ENCODE measurements at regions of chr3 and their contacts with region 1.

Region 1: DNA sequence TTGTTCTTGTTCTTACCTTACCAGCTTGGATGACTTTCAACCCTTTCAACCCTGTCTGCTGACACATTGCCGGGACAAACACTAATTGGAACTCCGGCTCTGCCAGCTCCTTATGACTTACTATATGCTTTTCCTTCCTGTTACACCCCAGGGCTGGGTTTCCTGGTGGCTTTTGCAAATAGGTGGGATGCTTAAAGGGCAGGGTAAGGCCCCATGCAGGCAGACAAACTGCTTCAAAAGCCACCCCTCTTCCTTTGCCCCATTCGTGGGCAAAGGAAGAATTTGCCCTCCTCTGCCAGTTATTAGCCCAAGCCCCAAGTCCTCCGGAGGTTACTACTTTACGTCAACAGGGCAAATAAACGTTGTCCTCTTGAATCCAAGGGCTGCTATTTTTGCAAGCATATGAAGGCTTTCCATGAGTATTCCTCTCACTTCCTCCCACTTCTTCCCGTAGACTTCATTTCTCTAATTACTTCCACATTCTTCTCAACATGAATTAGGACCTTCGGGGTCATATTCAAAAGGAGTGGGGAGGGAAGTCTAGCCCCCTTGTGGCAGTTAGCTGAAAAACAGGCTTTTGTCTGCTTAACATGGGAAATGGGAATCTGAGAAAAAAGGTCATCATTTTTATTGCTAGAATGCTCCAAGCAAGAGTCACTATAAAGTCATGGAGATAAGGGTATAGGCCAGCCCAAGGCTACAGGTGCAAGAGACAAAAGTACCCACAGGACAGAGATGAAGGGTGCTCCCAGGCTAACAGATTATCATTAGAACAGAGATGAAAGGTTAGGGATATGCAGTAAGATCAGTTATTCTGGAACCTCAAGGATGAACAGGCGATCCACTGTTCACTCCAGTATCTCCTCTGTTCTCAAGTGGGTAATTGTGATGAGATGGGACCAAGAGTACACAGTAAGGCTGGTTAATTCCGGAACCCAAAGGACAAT is 56.3 kb upstream of the FSTL1 start:
- DNase-seq: peak in 2 of 5 donors; percentile 17 to 40
- ATAC-seq: peak in 3 of 4 donors; percentile 38 to 77 (median 67)
- H3K4me3 ChIP-seq: peak overlapping the region in 2 of 12 donors; percentile 1 to 28
- H3K27ac ChIP-seq: peak overlapping the region in 8 of 12 donors; percentile 4 to 36 (median 27)
- H3K4me1 ChIP-seq: peaks cover 0 to 25% (median 14%) of the 10 kb centered on the region in 12 donors
- H3K27me3 ChIP-seq: no peaks in the 10 kb centered on the region
- CTCF ChIP-seq: peak; percentile 55 to 76 (median 68)
- POLR2A ChIP-seq: no peak

Region 2: GRCh38 chr3:120239644-120240043 is 267.5 kb before region 1 on chr3:
- intact Hi-C with region 1: loop called in 2 of 10 experiments (anchors 5 kb)
- DNase-seq: no peak
- ATAC-seq: no peak
- H3K4me3 ChIP-seq: no peak overlapping the region
- H3K27ac ChIP-seq: no peak overlapping the region
- H3K4me1 ChIP-seq: no peaks in the 10 kb centered on the region
- H3K27me3 ChIP-seq: peaks cover 0 to 8% (median 0%) of the 10 kb centered on the region in 9 donors
- CTCF ChIP-seq: no peak
- POLR2A ChIP-seq: no peak

Region 3: GRCh38 chr3:120348981-120349818 is 157.9 kb before region 1 on chr3 and contains the start of gene LRRC58:
- intact Hi-C with region 1: loop called in 1 of 10 experiments (anchors 5 kb)
- DNase-seq: peak; percentile 88 to 96 (median 92)
- ATAC-seq: peak; percentile 97 to 98 (median 97)
- H3K4me3 ChIP-seq: peak within 1 kb of the TSS; percentile 69 to 97 (median 84)
- H3K27ac ChIP-seq: peak within 1 kb of the TSS; percentile 80 to 94 (median 88)
- H3K4me1 ChIP-seq: peaks cover 0 to 41% (median 16%) of the 10 kb centered on the region in 12 donors
- H3K27me3 ChIP-seq: no peaks in the 10 kb centered on the region
- CTCF ChIP-seq: peak in 8 of 12 donors; percentile 10 to 54 (median 31)
- POLR2A ChIP-seq: peak; percentile 9 to 83
- total RNA-seq, gene LRRC58: 7.1 to 17.9 (median 10.5) TPM

Region 4: GRCh38 chr3:120425572-120426250 is 81.4 kb before region 1 on chr3:
- intact Hi-C with region 1: loop called in 6 of 10 experiments (anchors 2 to 10 kb)
- DNase-seq: peak in 3 of 5 donors; percentile 40 to 61 (median 42)
- ATAC-seq: peak in 2 of 4 donors; percentile 27 to 40
- H3K4me3 ChIP-seq: no peak overlapping the region
- H3K27ac ChIP-seq: peak overlapping the region; percentile 17 to 92 (median 80)
- H3K4me1 ChIP-seq: peaks cover 3 to 100% (median 79%) of the 10 kb centered on the region in 12 donors
- H3K27me3 ChIP-seq: no peaks in the 10 kb centered on the region
- CTCF ChIP-seq: no peak
- POLR2A ChIP-seq: no peak

Region 5: DNA sequence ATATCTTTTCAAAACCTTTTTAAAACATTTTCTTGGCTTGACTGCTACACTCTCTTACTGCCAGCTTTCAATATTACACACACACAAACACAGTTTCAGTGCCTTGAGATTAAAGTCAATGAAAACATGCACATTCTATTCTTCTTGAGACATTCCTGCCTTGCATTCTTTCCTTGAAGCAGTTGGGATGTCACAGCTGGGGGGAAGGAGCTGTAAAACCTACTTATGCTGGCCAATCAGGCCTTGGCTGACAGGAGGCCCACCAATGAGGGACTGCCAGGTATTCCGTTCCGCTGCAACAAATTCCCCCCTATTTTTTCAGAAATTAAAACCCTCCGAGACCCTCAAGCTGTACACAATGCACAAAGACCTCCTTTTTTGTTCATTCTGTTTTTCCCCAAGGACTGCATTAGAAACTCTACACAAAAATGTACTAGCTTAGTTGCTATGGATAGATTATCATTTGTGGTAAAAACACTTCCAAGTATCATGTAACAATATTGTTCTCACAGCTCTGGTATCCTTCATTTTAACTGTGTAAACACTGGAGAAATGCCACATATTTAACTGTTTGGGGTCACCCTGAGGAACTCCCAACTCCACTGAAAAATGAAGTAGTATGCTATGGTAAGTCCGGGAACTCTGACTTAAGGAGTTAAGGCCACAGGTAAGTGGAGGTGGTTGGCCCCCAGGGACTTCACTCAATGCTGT is 74.8 kb before region 1 on chr3:
- intact Hi-C with region 1: loop called in 4 of 10 experiments (anchors 5 to 10 kb)
- DNase-seq: no peak
- ATAC-seq: no peak
- H3K4me3 ChIP-seq: no peak overlapping the region
- H3K27ac ChIP-seq: peak overlapping the region in 8 of 12 donors; percentile 26 to 88 (median 60)
- H3K4me1 ChIP-seq: peaks cover 4 to 100% (median 80%) of the 10 kb centered on the region in 12 donors
- H3K27me3 ChIP-seq: no peaks in the 10 kb centered on the region
- CTCF ChIP-seq: no peak
- POLR2A ChIP-seq: no peak

Region 6: DNA sequence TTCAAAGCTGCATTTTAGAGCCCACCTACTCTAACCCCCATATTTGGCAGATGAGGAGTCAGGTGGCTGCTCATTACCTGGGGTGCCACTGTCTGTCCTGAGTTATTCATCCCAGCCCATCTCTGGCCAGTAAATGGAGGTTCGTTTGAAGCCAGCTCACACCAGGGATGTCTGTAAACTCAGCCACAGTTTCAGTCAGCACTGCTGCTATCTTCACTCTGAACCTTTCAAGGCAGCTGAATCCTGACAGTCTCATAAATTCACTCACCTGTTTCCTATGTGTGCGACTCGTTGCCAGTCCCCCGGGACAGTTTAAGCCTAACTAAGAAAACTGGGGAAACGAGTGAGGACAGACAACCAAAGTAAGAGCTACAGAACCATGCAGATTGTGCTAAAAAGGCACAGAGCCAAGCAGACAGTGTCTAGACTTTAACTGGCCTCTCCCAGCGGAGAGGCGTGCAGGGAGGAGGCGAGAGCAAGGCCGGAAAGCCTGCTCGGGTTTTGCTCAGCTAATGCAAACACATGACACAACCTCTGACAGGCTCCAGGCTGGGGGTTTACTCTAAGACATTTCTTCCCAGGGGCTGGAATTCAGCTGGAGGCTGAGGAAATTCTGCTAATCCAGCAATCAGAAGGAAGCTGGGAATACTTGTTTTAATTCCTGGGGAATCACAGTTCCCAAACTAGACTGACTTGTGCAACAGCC is 68.3 kb before region 1 on chr3:
- intact Hi-C with region 1: loop called in 2 of 10 experiments (anchors 5 kb)
- DNase-seq: peak; percentile 75 to 83 (median 82)
- ATAC-seq: peak; percentile 53 to 82 (median 80)
- H3K4me3 ChIP-seq: no peak overlapping the region
- H3K27ac ChIP-seq: peak overlapping the region in 11 of 12 donors; percentile 30 to 87 (median 70)
- H3K4me1 ChIP-seq: peaks cover 14 to 99% (median 84%) of the 10 kb centered on the region in 12 donors
- H3K27me3 ChIP-seq: no peaks in the 10 kb centered on the region
- CTCF ChIP-seq: no peak
- POLR2A ChIP-seq: no peak

Region 7: GRCh38 chr3:120450600-120451271 is 56.4 kb before region 1 on chr3 and contains the start of gene FSTL1:
- intact Hi-C with region 1: loop called in 6 of 10 experiments (anchors 2 to 10 kb)
- DNase-seq: peak; percentile 77 to 84 (median 82)
- ATAC-seq: peak; percentile 66 to 83 (median 78)
- H3K4me3 ChIP-seq: peak within 1 kb of the TSS; percentile 68 to 99 (median 90)
- H3K27ac ChIP-seq: peak within 1 kb of the TSS; percentile 91 to 98 (median 94)
- H3K4me1 ChIP-seq: peaks cover 0 to 45% (median 35%) of the 10 kb centered on the region in 12 donors
- H3K27me3 ChIP-seq: peaks cover 0 to 27% (median 0%) of the 10 kb centered on the region in 9 donors
- CTCF ChIP-seq: no peak
- POLR2A ChIP-seq: peak in 1 of 2 donors; percentile 83
- total RNA-seq, gene FSTL1: 138 to 667 (median 220) TPM

Region 8: GRCh38 chr3:120634539-120634938 is 127.4 kb after region 1 on chr3:
- intact Hi-C with region 1: no loop called
- DNase-seq: no peak
- ATAC-seq: peak in 3 of 4 donors; percentile 18 to 71 (median 58)
- H3K4me3 ChIP-seq: no peak overlapping the region
- H3K27ac ChIP-seq: peak overlapping the region in 2 of 12 donors; percentile 39 to 54
- H3K4me1 ChIP-seq: peaks cover 0 to 3% (median 0%) of the 10 kb centered on the region in 12 donors
- H3K27me3 ChIP-seq: no peaks in the 10 kb centered on the region
- CTCF ChIP-seq: no peak
- POLR2A ChIP-seq: no peak

Measured in heart left ventricle (tissue), 16 donors.